ENCODE measurements at regions of chr2 and their contacts with region 1.

Region 1: DNA sequence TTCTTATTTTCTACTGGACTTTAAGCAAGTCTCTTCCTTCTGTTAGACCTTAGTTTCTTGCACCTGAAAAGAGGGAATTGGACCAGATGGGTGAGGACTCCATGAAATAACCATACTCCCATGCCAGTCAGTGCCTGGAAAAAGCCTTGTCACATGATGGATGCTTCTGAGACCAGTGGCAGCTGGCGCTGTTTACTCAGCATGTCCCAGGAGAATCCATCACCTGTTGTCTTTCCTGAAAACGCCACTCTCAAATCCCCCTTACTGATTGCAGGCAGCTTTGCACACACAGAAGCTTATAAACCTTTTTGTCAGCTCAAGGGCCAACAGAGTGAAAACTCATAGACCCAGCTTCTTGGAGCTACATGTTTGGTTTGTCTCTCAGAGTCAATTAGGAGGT is 117.6 kb downstream of the POLE4 start:
- DNase-seq: no peak
- ATAC-seq: no peak
- H3K4me3 ChIP-seq: no peak overlapping the region
- H3K27ac ChIP-seq: no peak overlapping the region
- H3K4me1 ChIP-seq: peaks cover 8% of the 10 kb centered on the region
- H3K27me3 ChIP-seq: no peaks in the 10 kb centered on the region
- CTCF ChIP-seq: no peak
- EP300 ChIP-seq: no peak
- POLR2A ChIP-seq: no peak
- RAD21 ChIP-seq: no peak

Region 2: GRCh38 chr2:74653985-74654882 is 421.9 kb before region 1 on chr2 and contains the start of gene SEMA4F:
- CTCF ChIA-PET with region 1: no interaction called
- POLR2A ChIA-PET with region 1: no interaction called
- RAD21 ChIA-PET with region 1: no interaction called
- SMC1A ChIA-PET with region 1: no interaction called
- in situ Hi-C with region 1: no loop called
- intact Hi-C with region 1: no loop called
- DNase-seq: peak; percentile 90
- ATAC-seq: peak; percentile 99
- H3K4me3 ChIP-seq: peak within 1 kb of the TSS; percentile 78
- H3K27ac ChIP-seq: peak within 1 kb of the TSS; percentile 15; the same call in 1 of the 2 replicates
- H3K4me1 ChIP-seq: peaks cover 8% of the 10 kb centered on the region
- H3K27me3 ChIP-seq: no peaks in the 10 kb centered on the region
- CTCF ChIP-seq: no peak
- EP300 ChIP-seq: no peak
- POLR2A ChIP-seq: peak; percentile 62; the same call in 1 of the 2 replicates
- RAD21 ChIP-seq: no peak
- polyA plus RNA-seq, gene SEMA4F: 0.26 to 0.53 TPM

Region 3: DNA sequence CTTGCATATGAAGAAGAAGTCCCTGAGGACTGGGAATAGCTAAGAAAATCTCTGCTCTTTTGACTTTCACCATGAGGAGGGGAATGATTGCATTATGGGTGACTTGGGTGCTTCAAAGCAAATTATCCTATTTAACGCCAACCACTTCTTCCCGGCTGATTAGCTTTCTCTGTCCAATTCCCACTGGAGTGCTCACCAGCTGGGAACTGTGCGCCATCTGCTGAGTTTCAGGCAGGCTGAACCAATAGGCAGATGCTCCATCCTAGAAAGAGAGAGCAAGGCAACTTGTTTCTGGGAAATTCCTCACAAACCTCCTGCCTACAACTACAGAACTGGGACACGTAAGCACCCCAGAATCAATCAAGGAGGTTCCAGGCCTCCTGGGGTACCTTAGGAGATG is 68.3 kb before region 1 on chr2:
- CTCF ChIA-PET with region 1: no interaction called
- POLR2A ChIA-PET with region 1: no interaction called
- RAD21 ChIA-PET with region 1: no interaction called
- SMC1A ChIA-PET with region 1: no interaction called
- in situ Hi-C with region 1: no loop called
- intact Hi-C with region 1: no loop called
- DNase-seq: no peak
- ATAC-seq: no peak
- H3K4me3 ChIP-seq: no peak overlapping the region
- H3K27ac ChIP-seq: no peak overlapping the region
- H3K4me1 ChIP-seq: no peaks in the 10 kb centered on the region
- H3K27me3 ChIP-seq: no peaks in the 10 kb centered on the region
- CTCF ChIP-seq: no peak
- EP300 ChIP-seq: no peak
- POLR2A ChIP-seq: no peak
- RAD21 ChIP-seq: no peak

Region 4: DNA sequence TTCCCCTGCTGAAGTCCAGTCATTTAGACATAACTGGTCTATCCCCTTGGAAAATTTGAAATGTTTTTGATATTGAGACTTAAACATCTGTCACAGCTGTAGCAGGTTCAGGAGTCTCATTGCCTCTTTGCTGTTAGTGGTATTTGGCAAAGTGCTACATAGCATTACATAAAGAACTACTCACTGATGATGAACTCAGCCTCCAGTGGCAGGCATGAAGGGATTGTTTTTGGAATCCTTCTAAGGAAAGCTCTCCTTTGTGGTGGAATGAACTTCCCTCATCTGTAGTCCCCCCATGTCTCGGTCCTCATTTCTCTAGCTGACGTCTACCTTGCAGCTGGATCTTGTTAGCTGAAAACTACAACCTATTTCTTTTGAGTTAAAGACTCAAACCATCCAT is 11.6 kb after region 1 on chr2:
- CTCF ChIA-PET with region 1: interaction called, 3 read pairs
- POLR2A ChIA-PET with region 1: interaction called, 5 read pairs
- RAD21 ChIA-PET with region 1: interaction called, 3 read pairs
- SMC1A ChIA-PET with region 1: interaction called, 12 read pairs
- in situ Hi-C with region 1: no loop called
- intact Hi-C with region 1: no loop called
- DNase-seq: no peak
- ATAC-seq: no peak
- H3K4me3 ChIP-seq: no peak overlapping the region
- H3K27ac ChIP-seq: no peak overlapping the region
- H3K4me1 ChIP-seq: no peaks in the 10 kb centered on the region
- H3K27me3 ChIP-seq: no peaks in the 10 kb centered on the region
- CTCF ChIP-seq: no peak
- EP300 ChIP-seq: no peak
- POLR2A ChIP-seq: no peak
- RAD21 ChIP-seq: no peak

Region 5: GRCh38 chr2:75133621-75134570 is 57.8 kb after region 1 on chr2:
- CTCF ChIA-PET with region 1: no interaction called
- POLR2A ChIA-PET with region 1: no interaction called
- RAD21 ChIA-PET with region 1: no interaction called
- SMC1A ChIA-PET with region 1: no interaction called
- in situ Hi-C with region 1: no loop called
- intact Hi-C with region 1: no loop called
- DNase-seq: no peak
- ATAC-seq: no peak
- H3K4me3 ChIP-seq: no peak overlapping the region
- H3K27ac ChIP-seq: no peak overlapping the region
- H3K4me1 ChIP-seq: no peaks in the 10 kb centered on the region
- H3K27me3 ChIP-seq: no peaks in the 10 kb centered on the region
- CTCF ChIP-seq: no peak
- EP300 ChIP-seq: no peak
- POLR2A ChIP-seq: no peak
- RAD21 ChIP-seq: no peak